Cardiac septum (tissue), 1 donor: ENCODE measurements at regions of chr3 and their contacts with region 1.

Region 1: DNA sequence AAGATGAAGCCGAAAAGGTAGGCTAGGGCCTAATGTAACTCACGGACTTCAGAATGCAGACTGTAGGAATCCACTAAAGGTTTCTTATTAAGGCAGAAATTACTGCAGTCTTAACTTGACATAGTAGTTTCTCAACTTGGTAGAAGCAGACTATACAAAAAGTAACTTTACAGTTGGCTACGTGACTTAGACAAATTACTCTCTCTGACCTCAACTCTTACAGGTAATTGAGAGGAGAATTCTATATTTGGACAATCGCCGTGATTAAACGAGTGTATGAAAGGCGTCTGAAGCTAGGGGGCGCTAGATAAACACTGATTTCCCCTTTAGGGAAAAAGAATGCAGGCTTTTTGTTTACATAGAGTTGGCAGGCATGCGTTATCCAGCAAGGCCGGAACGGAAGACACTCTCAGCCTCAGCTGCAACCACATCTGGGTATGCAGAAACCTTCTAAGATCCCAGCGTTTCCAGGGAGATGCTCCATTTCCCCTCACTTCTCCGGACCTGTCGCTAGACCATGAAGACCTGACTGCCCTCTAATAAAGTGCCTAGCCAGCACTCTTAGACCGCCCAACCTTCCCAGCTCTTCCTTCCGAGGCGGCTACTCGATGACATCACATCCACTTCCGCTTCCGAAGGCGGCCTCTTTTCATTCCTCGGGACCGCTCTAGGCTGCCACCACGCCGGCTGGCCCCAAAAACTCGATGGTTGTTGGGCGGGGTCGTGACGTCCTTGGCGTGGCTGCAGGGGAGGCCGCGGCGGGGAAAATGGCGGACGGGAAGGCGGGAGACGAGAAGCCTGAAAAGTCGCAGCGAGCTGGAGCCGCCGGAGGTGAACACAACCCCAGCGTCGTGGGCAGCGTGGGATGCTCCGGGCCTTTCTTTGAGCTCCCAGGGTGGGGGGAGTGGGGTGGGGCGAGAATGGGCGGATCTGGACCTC is at the start of gene PCNP:
- DNase-seq: peak; percentile 99
- total RNA-seq, gene PCNP: 120 TPM

Region 2: DNA sequence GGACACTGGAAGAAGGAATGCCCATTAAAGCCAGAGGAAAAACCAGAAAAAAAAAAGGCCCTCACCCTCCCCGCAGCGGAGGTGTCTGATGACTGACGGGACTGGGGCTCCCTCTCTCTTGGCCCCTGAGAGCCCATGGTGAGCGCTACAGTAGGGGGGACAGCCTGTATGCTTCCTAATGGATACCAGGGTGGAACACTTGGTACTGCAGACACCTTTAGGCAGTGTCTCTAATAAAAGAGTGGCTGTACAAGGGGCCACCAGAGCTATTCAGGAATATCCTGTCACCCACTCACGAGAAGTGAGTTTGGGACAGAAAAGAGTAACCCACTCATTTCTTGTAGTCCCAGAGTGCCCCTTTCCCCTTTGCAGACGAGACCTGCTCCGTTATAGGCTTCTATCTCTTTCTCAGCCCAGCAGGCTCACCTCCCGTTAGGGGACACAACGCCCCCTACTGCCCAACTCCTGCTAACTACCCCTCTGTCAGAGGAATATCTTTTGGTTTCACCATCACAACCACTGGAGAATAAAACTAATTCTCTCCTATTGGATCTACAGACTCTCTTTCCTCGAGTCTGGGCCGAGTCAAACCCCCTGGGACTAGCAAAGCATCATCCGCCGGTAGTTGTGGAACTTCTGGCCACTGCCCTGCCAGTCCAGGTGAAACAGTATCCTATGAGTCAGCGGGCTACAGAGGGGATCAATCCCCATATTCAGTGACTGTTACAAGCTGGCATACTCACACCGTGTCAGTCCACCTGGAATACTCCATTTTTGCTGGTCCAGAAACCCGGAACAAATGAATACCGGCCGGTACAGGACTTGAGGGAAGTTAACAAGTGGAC is 62.5 kb after region 1 on chr3:
- intact Hi-C with region 1: loop called (anchors 5 kb)
- DNase-seq: no peak

Region 3: GRCh38 chr3:101676765-101677435 is 103.2 kb after region 1 on chr3 and contains the start of gene ZBTB11:
- intact Hi-C with region 1: loop called (anchors 1 kb)
- DNase-seq: peak; percentile 100
- total RNA-seq, gene ZBTB11: 8.4 TPM